Head of caudate nucleus (tissue), 42 donors: ENCODE measurements at regions of chr7 and their contacts with region 1.

Region 1: DNA sequence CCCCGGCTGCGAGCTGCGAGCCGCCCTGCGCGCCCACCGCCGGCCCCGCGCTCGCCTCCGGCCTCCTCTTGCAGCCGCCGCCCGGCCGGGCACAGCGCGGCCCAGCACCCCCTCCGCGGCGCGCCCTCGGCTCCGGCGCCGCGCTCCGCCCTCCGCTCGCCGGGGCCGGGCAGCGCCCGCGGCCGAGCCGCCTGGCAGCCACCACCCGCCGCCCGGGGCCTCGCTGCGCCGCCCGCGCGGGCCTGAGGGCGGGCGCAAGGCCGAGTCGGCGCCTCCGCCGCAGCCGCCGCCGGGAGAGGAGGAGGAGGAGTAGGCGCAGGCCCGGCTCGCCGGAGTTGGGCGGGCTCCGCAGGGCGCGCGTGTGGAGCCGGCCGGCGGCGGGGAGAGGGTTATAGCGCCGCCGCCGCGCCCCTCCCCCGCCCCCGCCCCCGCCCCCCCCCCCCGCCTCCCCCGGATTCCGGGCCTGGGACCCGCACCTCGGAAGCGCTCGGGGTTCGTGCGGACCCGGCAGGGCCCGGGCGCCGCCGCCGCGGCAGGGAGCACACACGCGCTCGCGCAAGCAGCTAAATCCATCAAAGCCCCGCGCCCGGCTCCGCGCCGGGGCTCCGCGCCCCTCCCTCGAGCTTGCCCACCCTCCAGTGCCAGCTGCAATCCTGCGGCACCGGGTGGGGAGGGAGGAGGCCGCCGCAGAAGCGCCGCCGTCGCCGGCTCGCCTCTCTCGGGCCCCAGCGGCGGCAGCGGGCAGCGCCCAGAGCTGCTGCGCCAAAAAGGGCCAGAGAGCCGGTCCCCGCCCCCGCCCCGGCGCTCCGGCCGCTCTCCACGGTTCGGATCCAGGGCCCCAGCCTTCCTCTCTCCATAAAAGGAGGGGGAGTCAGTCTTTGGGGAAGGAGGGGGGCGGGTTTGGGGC is at the start of gene PDGFA:
- DNase-seq: peak in 38 of 42 donors; percentile 40 to 85 (median 70)

Region 2: GRCh38 chr7:341841-342638 is 177.7 kb before region 1 on chr7:
- intact Hi-C with region 1: loop called (anchors 5 kb)
- DNase-seq: peak; percentile 73 to 96 (median 89)

Region 3: DNA sequence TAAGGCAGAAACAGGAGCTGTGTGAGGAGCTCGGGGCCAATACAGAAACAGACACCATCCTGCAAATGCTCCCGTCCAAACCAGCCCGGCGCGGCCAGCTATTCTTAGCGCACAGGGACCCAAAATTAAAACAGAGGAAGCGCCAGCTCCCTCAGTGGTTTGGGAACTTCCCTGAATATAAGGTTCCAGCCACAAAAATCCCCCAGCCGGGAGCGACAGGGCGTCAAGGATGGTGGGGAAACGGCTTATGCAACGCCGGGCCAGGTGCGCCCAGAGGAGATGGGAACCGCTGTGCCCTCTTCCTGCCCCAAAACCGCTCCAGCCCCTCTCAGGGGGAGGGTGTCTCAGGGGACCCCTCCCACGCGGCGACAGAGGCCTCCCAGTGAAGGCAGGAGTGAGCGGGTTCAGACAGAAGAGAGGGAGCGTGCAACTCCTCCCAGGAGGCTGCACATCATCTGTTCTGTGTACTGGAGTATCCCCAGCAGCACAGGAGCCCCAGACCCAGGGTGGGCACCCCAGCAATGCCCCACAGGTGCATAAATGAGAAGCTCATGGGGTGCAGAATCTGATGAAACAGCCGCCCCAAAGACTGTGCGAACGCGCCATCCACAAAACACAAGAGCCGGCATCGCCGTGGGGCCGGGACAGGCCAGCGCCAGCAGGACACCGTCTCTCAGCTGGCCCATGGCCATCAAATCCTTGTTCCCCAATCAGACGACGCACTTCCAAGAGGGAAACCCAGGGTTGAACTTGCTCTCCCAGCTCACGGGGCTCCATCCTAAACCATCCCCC is 73.8 kb after region 1 on chr7:
- intact Hi-C with region 1: loop called (anchors 10 kb)
- DNase-seq: peak in 3 of 42 donors; percentile 13 to 45 (median 24)

Region 4: DNA sequence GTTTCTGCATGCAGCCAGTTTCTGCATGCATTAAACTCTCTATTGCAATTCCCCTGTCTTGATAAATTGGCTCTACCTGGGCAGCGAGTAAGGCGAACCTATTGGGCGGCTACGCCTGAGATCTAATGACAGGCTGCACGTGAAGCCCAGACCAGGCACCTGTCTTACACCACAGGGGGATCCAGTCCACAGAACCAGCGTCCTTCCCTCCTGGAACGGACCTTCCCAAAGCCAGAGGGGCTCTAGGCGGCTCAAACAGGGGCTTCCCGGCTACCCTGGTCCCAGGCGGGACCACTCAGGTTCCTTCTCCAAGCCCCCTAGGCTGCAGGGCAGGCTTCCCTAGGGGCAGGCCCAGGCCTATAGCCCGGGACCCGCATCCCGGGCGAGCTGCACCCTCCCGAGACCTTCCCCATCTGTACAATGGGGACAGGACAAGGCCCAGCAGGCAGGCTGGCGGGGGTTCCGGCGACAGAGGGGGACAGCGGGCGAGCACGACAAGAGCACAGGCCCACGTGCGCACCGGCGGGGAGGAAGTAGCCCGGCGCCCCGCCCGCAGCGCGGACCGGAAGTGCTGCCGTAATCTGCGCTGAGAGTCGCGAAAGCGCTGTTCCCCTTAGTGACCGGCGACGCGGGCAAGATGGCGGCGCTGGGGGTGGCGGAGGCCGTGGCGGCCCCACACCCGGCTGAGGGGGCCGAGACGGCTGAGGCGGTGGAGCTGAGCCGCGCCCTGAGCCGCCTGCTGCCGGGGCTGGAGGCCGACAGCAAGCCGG is 206.5 kb after region 1 on chr7 and contains the start of gene DNAAF5:
- intact Hi-C with region 1: loop called (anchors 5 kb)
- DNase-seq: peak; percentile 71 to 95 (median 89)